IMR-90 (cell line): ENCODE measurements at regions of chr1 and their contacts with region 1.

Region 1: GRCh38 chr1:23772049-23772853 is 6.0 kb upstream of the PITHD1 start:
- DNase-seq: peak; percentile 76
- ATAC-seq: peak; percentile 100
- H3K4me3 ChIP-seq: no peak overlapping the region
- H3K27ac ChIP-seq: no peak overlapping the region
- H3K4me1 ChIP-seq: 0 out of 2 replicates have a peak, but pooled peaks cover 2% of the 10 kb centered on the region
- H3K27me3 ChIP-seq: no peaks in the 10 kb centered on the region
- CTCF ChIP-seq: peak; percentile 90
- POLR2A ChIP-seq: no peak
- RAD21 ChIP-seq: peak; percentile 86

Region 2: GRCh38 chr1:23507507-23507906 is 264.7 kb before region 1 on chr1:
- CTCF ChIA-PET with region 1: no interaction called
- POLR2A ChIA-PET with region 1: no interaction called
- dilution Hi-C with region 1: no loop called
- in situ Hi-C with region 1: no loop called
- intact Hi-C with region 1: no loop called
- DNase-seq: no peak
- ATAC-seq: no peak
- H3K4me3 ChIP-seq: no peak overlapping the region
- H3K27ac ChIP-seq: no peak overlapping the region
- H3K4me1 ChIP-seq: no peaks in the 10 kb centered on the region
- H3K27me3 ChIP-seq: no peaks in the 10 kb centered on the region
- CTCF ChIP-seq: no peak
- POLR2A ChIP-seq: no peak
- RAD21 ChIP-seq: no peak

Region 3: GRCh38 chr1:23854568-23854967 is 82.3 kb after region 1 on chr1:
- CTCF ChIA-PET with region 1: interaction called, 3 read pairs
- POLR2A ChIA-PET with region 1: no interaction called
- dilution Hi-C with region 1: no loop called
- in situ Hi-C with region 1: no loop called
- intact Hi-C with region 1: loop called (anchors 5 kb)
- DNase-seq: no peak
- ATAC-seq: no peak
- H3K4me3 ChIP-seq: no peak overlapping the region
- H3K27ac ChIP-seq: no peak overlapping the region
- H3K4me1 ChIP-seq: no peaks in the 10 kb centered on the region
- H3K27me3 ChIP-seq: peaks cover 4% of the 10 kb centered on the region; the same call in 1 of the 2 replicates
- CTCF ChIP-seq: peak; percentile 33
- POLR2A ChIP-seq: no peak
- RAD21 ChIP-seq: peak; percentile 37; the same call in 1 of the 2 replicates

Region 4: DNA sequence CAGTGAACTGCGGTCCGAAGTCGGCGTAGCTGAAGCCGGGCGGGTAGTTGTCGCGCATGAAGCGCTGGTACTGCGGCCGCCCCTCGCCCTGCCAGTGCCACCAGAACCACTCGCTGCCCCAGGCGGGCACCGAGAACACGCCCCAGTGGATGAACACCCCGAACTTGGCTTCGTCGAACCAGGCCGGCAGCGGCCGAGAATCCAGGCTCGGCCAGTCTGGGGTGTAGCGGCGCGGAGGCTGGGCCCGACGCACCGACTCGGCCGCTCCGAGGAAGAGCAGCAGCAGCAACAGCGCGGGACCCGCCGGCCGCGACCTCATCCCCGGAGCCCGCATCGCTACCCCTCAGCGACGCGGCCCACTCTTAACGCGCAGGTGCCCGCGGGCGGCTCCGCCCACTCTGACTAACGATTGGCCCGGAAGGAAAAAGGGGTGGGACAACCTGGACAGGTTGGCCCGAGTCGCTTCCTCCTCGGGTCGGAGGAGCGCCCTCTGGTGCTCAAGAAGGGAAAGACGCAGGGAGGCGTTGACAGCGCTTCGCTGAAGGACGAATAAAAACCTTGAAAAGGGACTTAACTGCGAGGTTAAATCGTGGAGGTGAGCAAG is 95.8 kb after region 1 on chr1 and contains the start of gene FUCA1:
- CTCF ChIA-PET with region 1: no interaction called
- POLR2A ChIA-PET with region 1: no interaction called
- dilution Hi-C with region 1: no loop called
- in situ Hi-C with region 1: no loop called
- intact Hi-C with region 1: loop called (anchors 1 kb)
- DNase-seq: peak; percentile 77
- ATAC-seq: peak; percentile 99
- H3K4me3 ChIP-seq: peak within 1 kb of the TSS; percentile 61
- H3K27ac ChIP-seq: no peak within 1 kb of the TSS
- H3K4me1 ChIP-seq: no peaks in the 10 kb centered on the region
- H3K27me3 ChIP-seq: peaks cover 24% of the 10 kb centered on the region
- CTCF ChIP-seq: peak; percentile 84
- POLR2A ChIP-seq: no peak
- RAD21 ChIP-seq: peak; percentile 60
- total RNA-seq, gene FUCA1: 2.8 and 2.9 TPM in 2 replicates

Region 5: DNA sequence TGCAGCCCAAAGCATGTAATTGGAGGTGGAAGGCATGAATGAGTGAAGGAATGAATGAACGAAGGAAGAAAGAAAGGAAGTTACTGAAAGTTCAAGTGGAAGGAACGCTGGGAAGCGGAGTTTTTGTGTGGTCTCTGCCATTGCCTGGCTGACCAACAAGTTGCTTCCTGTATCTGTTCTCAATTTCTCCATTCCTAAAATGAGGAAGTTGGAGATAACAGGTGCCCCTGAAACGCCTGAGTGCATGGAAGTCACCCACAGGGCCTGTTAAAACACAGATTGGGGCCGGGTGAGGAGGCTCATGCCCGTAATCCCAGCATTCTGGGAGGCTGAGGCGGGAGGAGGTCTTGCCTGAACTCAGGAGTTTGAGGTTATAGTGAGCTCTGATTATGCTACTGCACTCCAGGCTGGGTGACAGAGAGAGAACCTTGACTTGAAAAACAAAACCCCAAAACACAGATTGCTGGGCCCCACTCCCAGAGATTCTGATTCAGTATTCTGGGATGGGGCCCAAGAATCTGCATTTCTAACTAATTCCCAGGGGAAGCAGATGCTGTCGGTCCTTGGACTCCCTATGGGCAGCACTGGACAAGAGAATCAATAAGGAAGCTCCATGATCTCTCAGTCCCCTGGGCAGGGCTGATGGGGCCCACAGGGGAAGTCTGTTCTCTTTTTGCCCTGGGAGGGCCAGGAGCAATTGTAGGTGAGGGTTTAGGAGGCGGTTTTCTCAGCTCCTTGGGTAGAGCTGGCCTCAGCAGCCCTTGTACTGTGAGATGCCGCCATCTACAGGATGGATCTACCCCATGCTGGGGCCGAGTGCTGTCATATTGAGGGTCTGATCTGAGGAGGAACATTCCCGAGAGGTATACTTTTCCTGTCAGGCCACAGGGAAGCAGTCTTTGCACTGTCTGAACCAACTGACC is 144.2 kb after region 1 on chr1:
- CTCF ChIA-PET with region 1: interaction called, 5 read pairs
- POLR2A ChIA-PET with region 1: no interaction called
- dilution Hi-C with region 1: no loop called
- in situ Hi-C with region 1: no loop called
- intact Hi-C with region 1: loop called (anchors 1 kb)
- DNase-seq: peak; percentile 58
- ATAC-seq: peak; percentile 96
- H3K4me3 ChIP-seq: no peak overlapping the region
- H3K27ac ChIP-seq: no peak overlapping the region
- H3K4me1 ChIP-seq: peaks cover 2% of the 10 kb centered on the region; the same call in 1 of the 2 replicates
- H3K27me3 ChIP-seq: peaks cover 5% of the 10 kb centered on the region
- CTCF ChIP-seq: peak; percentile 67
- POLR2A ChIP-seq: no peak
- RAD21 ChIP-seq: peak; percentile 75